ENCODE measurements at regions of chr1 and their contacts with region 1.

Region 1: GRCh38 chr1:178752891-178753290 is 27.8 kb downstream of the RALGPS2 start:
- DNase-seq: no peak
- ATAC-seq: no peak
- H3K4me3 ChIP-seq: no peak overlapping the region
- H3K4me3 Mint-ChIP-seq: no peak overlapping the region
- H3K27ac ChIP-seq: no peak overlapping the region
- H3K27ac Mint-ChIP-seq: no peak overlapping the region
- H3K4me1 ChIP-seq: no peaks in the 10 kb centered on the region
- H3K4me1 Mint-ChIP-seq: no peaks in the 10 kb centered on the region
- H3K27me3 ChIP-seq: no peaks in the 10 kb centered on the region
- H3K27me3 Mint-ChIP-seq: no peaks in the 10 kb centered on the region
- CTCF ChIP-seq: no peak

Region 2: GRCh38 chr1:178542560-178543356 is 210.1 kb before region 1 on chr1:
- intact Hi-C with region 1: loop called (anchors 1 kb)
- DNase-seq: peak; percentile 88 to 94
- ATAC-seq: peak; percentile 94 to 97 (median 95)
- H3K4me3 ChIP-seq: peak overlapping the region; percentile 82
- H3K4me3 Mint-ChIP-seq: peak overlapping the region; percentile 95
- H3K27ac ChIP-seq: peak overlapping the region; percentile 34
- H3K27ac Mint-ChIP-seq: peak overlapping the region in 1 of 2 donors; percentile 86
- H3K4me1 ChIP-seq: peaks cover 15% of the 10 kb centered on the region
- H3K4me1 Mint-ChIP-seq: peaks cover 0 to 22% of the 10 kb centered on the region in 2 donors
- H3K27me3 ChIP-seq: no peaks in the 10 kb centered on the region
- H3K27me3 Mint-ChIP-seq: peaks cover 0 to 3% of the 10 kb centered on the region in 2 donors
- CTCF ChIP-seq: peak; percentile 99

Region 3: GRCh38 chr1:178566187-178566586 is 186.7 kb before region 1 on chr1:
- intact Hi-C with region 1: no loop called
- DNase-seq: no peak
- ATAC-seq: no peak
- H3K4me3 ChIP-seq: no peak overlapping the region
- H3K4me3 Mint-ChIP-seq: no peak overlapping the region
- H3K27ac ChIP-seq: no peak overlapping the region
- H3K27ac Mint-ChIP-seq: no peak overlapping the region
- H3K4me1 ChIP-seq: no peaks in the 10 kb centered on the region
- H3K4me1 Mint-ChIP-seq: no peaks in the 10 kb centered on the region
- H3K27me3 ChIP-seq: no peaks in the 10 kb centered on the region
- H3K27me3 Mint-ChIP-seq: no peaks in the 10 kb centered on the region
- CTCF ChIP-seq: no peak

Region 4: DNA sequence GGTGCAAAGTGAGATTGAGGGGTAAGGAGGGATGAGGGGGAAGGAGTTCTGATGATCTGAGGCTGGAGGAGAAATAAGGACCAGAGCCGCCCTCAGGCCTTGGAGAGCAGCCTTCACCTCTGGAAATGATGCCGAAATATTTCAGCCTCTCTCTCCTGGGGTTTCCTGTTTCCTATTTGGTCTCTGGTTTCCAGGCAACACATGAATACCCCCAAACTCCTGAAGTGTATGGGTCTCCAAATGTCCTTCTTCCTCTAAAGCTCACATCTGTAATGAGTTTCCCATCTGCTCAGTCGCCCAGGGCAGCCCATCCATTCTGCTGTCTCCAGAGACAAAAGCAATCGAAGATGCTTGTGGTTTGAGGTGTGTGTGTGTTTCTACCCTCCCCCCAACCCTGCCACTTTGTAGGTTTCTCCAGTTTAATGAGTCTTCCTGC is 220.8 kb after region 1 on chr1:
- intact Hi-C with region 1: no loop called
- DNase-seq: no peak
- ATAC-seq: no peak
- H3K4me3 ChIP-seq: no peak overlapping the region
- H3K4me3 Mint-ChIP-seq: no peak overlapping the region
- H3K27ac ChIP-seq: no peak overlapping the region
- H3K27ac Mint-ChIP-seq: no peak overlapping the region
- H3K4me1 ChIP-seq: peaks cover 6% of the 10 kb centered on the region
- H3K4me1 Mint-ChIP-seq: peaks cover 0 to 12% of the 10 kb centered on the region in 2 donors
- H3K27me3 ChIP-seq: no peaks in the 10 kb centered on the region
- H3K27me3 Mint-ChIP-seq: peaks cover 6 to 8% of the 10 kb centered on the region in 2 donors
- CTCF ChIP-seq: no peak